ENCODE measurements at regions of chr3 and their contacts with region 1.

Region 1: GRCh38 chr3:103963599-103963998 is 1403.1 kb upstream of the ALCAM start:
- DNase-seq: no peak
- ATAC-seq: no peak
- H3K4me3 ChIP-seq: no peak overlapping the region
- H3K27ac ChIP-seq: no peak overlapping the region
- H3K4me1 ChIP-seq: no peaks in the 10 kb centered on the region
- H3K27me3 ChIP-seq: no peaks in the 10 kb centered on the region
- CTCF ChIP-seq: no peak
- EP300 ChIP-seq: no peak
- POLR2A ChIP-seq: no peak
- RAD21 ChIP-seq: no peak

Region 2: DNA sequence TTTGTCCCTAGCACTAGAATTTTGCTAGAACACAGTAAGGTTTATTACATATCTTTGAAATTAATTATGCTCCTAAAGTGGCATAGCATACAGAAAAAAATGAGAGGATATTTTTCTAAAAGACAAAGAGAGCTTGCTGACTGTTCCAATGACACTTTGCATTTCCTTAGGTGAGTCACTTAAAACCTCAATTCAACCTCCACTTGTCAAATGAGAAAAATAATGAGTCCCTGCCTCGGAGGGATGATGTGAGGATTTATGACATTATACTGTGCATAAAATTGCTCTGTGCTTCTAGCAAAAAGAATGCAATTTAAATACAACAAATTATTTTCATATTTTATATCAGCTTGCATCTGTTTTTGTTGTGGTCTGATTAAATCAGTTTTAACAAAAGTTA is 13.9 kb before region 1 on chr3:
- CTCF ChIA-PET with region 1: interaction called, 14 read pairs
- POLR2A ChIA-PET with region 1: interaction called, 6 read pairs
- RAD21 ChIA-PET with region 1: interaction called, 5 read pairs
- SMC1A ChIA-PET with region 1: interaction called, 11 read pairs
- in situ Hi-C with region 1: no loop called
- intact Hi-C with region 1: no loop called
- DNase-seq: no peak
- ATAC-seq: no peak
- H3K4me3 ChIP-seq: no peak overlapping the region
- H3K27ac ChIP-seq: no peak overlapping the region
- H3K4me1 ChIP-seq: no peaks in the 10 kb centered on the region
- H3K27me3 ChIP-seq: no peaks in the 10 kb centered on the region
- CTCF ChIP-seq: no peak
- EP300 ChIP-seq: no peak
- POLR2A ChIP-seq: no peak
- RAD21 ChIP-seq: no peak

Region 3: DNA sequence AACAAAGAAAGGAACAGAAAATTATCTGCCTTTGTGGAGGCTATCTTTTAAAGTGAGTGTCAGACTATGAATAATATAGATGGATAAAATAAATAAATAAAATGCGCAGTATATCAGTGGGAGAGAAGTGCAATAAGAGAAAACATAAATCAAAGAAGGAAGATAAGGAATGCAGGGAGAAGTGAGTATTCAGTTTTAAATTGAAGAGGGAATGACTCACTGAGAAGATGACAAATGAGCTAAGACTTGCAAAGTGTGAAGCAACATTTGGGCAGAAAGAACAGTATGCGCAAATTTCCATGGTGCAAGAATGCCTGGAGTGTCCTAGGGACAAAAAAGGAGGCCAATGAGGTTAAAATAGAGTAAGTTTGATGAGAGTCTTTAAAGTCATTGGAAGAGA is 103.1 kb after region 1 on chr3:
- CTCF ChIA-PET with region 1: no interaction called
- POLR2A ChIA-PET with region 1: no interaction called
- RAD21 ChIA-PET with region 1: no interaction called
- SMC1A ChIA-PET with region 1: no interaction called
- in situ Hi-C with region 1: no loop called
- intact Hi-C with region 1: no loop called
- DNase-seq: no peak
- ATAC-seq: no peak
- H3K4me3 ChIP-seq: no peak overlapping the region
- H3K27ac ChIP-seq: no peak overlapping the region
- H3K4me1 ChIP-seq: no peaks in the 10 kb centered on the region
- H3K27me3 ChIP-seq: no peaks in the 10 kb centered on the region
- CTCF ChIP-seq: no peak
- EP300 ChIP-seq: no peak
- POLR2A ChIP-seq: no peak
- RAD21 ChIP-seq: no peak